Panc1 (cell line): ENCODE measurements at regions of chr20 and their contacts with region 1.

Region 1: DNA sequence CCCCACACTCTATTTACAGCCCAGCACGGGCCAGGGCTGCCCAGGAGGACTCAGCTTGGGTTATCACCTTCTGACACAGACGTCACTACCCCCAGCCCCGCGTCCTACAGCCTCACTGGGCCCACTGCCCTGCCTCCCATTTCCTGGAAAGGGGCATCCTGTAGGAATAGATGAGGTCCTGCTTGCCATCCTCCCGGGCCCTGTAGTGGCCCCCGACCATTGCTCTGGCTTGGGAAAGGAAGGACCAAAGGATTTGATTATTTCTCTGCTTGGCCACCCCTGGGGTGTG is 269.4 kb downstream of the TAF4 start:
- DNase-seq: no peak
- ATAC-seq: no peak
- H3K4me3 ChIP-seq: no peak overlapping the region
- H3K27ac ChIP-seq: no peak overlapping the region
- H3K4me1 ChIP-seq: no peaks in the 10 kb centered on the region
- H3K27me3 ChIP-seq: no peaks in the 10 kb centered on the region
- CTCF ChIP-seq: no peak

Region 2: GRCh38 chr20:61534346-61534745 is 261.9 kb before region 1 on chr20:
- CTCF ChIA-PET with region 1: interaction called, 11 read pairs
- POLR2A ChIA-PET with region 1: no interaction called
- in situ Hi-C with region 1: no loop called
- intact Hi-C with region 1: no loop called
- DNase-seq: no peak
- ATAC-seq: no peak
- H3K4me3 ChIP-seq: no peak overlapping the region
- H3K27ac ChIP-seq: no peak overlapping the region
- H3K4me1 ChIP-seq: no peaks in the 10 kb centered on the region
- H3K27me3 ChIP-seq: peaks cover 8% of the 10 kb centered on the region
- CTCF ChIP-seq: no peak

Region 3: GRCh38 chr20:61786230-61786629 is 10.1 kb before region 1 on chr20:
- CTCF ChIA-PET with region 1: no interaction called
- POLR2A ChIA-PET with region 1: no interaction called
- in situ Hi-C with region 1: no loop called
- intact Hi-C with region 1: no loop called
- DNase-seq: no peak
- ATAC-seq: no peak
- H3K4me3 ChIP-seq: no peak overlapping the region
- H3K27ac ChIP-seq: no peak overlapping the region
- H3K4me1 ChIP-seq: no peaks in the 10 kb centered on the region
- H3K27me3 ChIP-seq: peaks cover 4% of the 10 kb centered on the region; the same call in 1 of the 2 replicates
- CTCF ChIP-seq: no peak